ENCODE measurements at regions of chr18 and their contacts with region 1.

Region 1: GRCh38 chr18:63511286-63511685 is 30.9 kb upstream of the SERPINB12 start:
- DNase-seq: no peak
- H3K4me3 ChIP-seq: no peak overlapping the region
- CTCF ChIP-seq: peak; percentile 73

Region 2: DNA sequence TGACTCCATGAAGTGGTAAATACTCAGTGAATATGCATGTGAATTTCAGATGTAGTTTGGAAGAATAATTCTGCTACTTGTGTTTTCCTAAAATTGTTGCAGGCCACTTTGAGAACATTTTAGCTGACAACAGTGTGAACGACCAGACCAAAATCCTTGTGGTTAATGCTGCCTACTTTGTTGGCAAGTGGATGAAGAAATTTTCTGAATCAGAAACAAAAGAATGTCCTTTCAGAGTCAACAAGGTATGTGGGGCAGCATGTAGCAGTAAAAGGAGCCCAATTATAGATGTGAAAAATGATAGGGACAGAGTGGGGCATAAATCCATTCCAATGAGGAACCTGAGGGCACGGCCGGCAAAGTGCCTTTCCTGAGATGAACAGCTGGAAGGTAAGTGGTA is 18.4 kb before region 1 on chr18:
- CTCF ChIA-PET with region 1: interaction called, 246 read pairs
- POLR2A ChIA-PET with region 1: no interaction called
- DNase-seq: no peak
- H3K4me3 ChIP-seq: no peak overlapping the region
- CTCF ChIP-seq: no peak

Region 3: GRCh38 chr18:63528863-63529492 is 17.7 kb after region 1 on chr18:
- CTCF ChIA-PET with region 1: interaction called, 63 read pairs
- POLR2A ChIA-PET with region 1: no interaction called
- DNase-seq: no peak
- H3K4me3 ChIP-seq: no peak overlapping the region
- CTCF ChIP-seq: no peak

Region 4: GRCh38 chr18:63562284-63562683 is 51.0 kb after region 1 on chr18:
- CTCF ChIA-PET with region 1: interaction called, 20 read pairs
- POLR2A ChIA-PET with region 1: no interaction called
- DNase-seq: no peak
- H3K4me3 ChIP-seq: no peak overlapping the region
- CTCF ChIP-seq: no peak